ENCODE measurements at regions of chr19 and their contacts with region 1.

Region 1: GRCh38 chr19:28737021-28737895 is 475.7 kb downstream of the UQCRFS1 start:
- ATAC-seq: peak; percentile 32 to 82 (median 61)
- H3K4me3 ChIP-seq: no peak overlapping the region
- H3K27ac ChIP-seq: no peak overlapping the region
- H3K4me1 ChIP-seq: peaks cover 4 to 8% of the 10 kb centered on the region in 2 donors

Region 2: GRCh38 chr19:28443361-28443760 is 293.9 kb before region 1 on chr19:
- in situ Hi-C with region 1: no loop called
- ATAC-seq: peak in 5 of 8 experiments; percentile 88 to 97 (median 97)
- H3K4me3 ChIP-seq: no peak overlapping the region
- H3K27ac ChIP-seq: peak overlapping the region in 1 of 2 donors; percentile 61
- H3K4me1 ChIP-seq: peaks cover 8 to 11% of the 10 kb centered on the region in 2 donors

Region 3: DNA sequence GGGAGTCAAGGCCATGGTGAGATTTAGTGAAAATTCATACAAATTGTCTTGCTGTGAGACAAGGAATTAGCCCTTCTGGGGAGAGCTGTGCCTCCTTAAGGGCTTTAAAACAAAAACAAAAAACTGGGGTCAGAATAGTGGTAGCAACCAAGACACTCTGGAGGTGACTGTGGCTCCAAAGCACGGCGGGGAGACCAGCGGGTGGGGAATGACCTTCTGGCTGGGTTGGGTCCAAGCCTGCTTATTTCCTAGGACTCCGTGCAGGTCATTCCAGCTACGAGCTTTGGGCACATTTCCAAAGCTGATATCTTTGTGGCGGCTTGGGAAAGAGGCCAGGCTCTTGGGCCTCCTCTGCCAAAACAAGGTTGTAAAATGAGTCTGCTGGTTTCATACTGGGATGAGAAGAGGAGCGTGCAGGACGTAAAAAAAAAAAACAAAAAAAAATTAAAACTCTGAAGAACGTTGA is 127.4 kb after region 1 on chr19:
- in situ Hi-C with region 1: loop called in 1 of 9 experiments (anchors 25 kb)
- ATAC-seq: no peak
- H3K4me3 ChIP-seq: no peak overlapping the region
- H3K27ac ChIP-seq: no peak overlapping the region
- H3K4me1 ChIP-seq: peaks cover 2% of the 10 kb centered on the region in 2 donors

Region 4: GRCh38 chr19:28878862-28879566 is 141.8 kb after region 1 on chr19:
- in situ Hi-C with region 1: loop called in 3 of 9 experiments (anchors 10 to 25 kb)
- ATAC-seq: peak; percentile 58 to 92 (median 72)
- H3K4me3 ChIP-seq: no peak overlapping the region
- H3K27ac ChIP-seq: no peak overlapping the region
- H3K4me1 ChIP-seq: peaks cover 37 to 46% of the 10 kb centered on the region in 2 donors

Region 5: GRCh38 chr19:28980236-28980868 is 243.1 kb after region 1 on chr19:
- in situ Hi-C with region 1: loop called in 1 of 9 experiments (anchors 25 kb)
- ATAC-seq: peak in 7 of 8 experiments; percentile 49 to 99 (median 74)
- H3K4me3 ChIP-seq: no peak overlapping the region
- H3K27ac ChIP-seq: peak overlapping the region in 1 of 2 donors; percentile 3
- H3K4me1 ChIP-seq: peaks cover 6 to 7% of the 10 kb centered on the region in 2 donors

Measured in motor neuron (in vitro differentiated cells).